ENCODE measurements at regions of chr20 and their contacts with region 1.

Region 1: DNA sequence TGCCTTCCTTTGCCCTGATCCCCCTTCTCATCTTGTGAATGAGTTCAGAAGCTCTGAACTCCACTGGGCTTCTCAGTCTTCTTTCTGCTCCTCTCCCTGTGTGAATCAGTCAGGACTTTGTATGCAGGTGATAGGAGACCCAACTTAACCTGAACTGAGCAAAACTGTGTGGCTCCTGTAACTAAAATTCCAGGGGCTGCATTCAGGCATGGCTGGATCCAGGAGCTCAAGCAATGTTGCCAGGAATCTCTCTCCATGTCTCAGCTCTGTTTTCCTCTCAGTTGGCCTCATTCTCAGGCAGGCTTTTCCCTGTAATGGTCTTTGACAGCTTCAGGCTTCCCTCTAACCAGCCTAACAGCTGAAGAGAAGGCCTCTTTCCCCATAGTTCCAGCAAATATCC is 50.9 kb upstream of the ZNFX1 start:
- DNase-seq: no peak
- H3K4me3 Mint-ChIP-seq: no peak overlapping the region
- H3K27ac Mint-ChIP-seq: no peak overlapping the region
- H3K4me1 Mint-ChIP-seq: no peaks in the 10 kb centered on the region
- H3K27me3 Mint-ChIP-seq: peaks cover 33% of the 10 kb centered on the region
- CTCF ChIP-seq: no peak

Region 2: GRCh38 chr20:49078296-49078695 is 250.5 kb before region 1 on chr20:
- CTCF ChIA-PET with region 1: no interaction called
- POLR2A ChIA-PET with region 1: no interaction called
- intact Hi-C with region 1: no loop called
- DNase-seq: no peak
- H3K4me3 Mint-ChIP-seq: no peak overlapping the region
- H3K27ac Mint-ChIP-seq: no peak overlapping the region
- H3K4me1 Mint-ChIP-seq: no peaks in the 10 kb centered on the region
- H3K27me3 Mint-ChIP-seq: no peaks in the 10 kb centered on the region
- CTCF ChIP-seq: no peak

Region 3: GRCh38 chr20:49534255-49534712 is 205.5 kb after region 1 on chr20:
- CTCF ChIA-PET with region 1: interaction called, 80 read pairs
- POLR2A ChIA-PET with region 1: no interaction called
- intact Hi-C with region 1: no loop called
- DNase-seq: peak; percentile 74
- H3K4me3 Mint-ChIP-seq: no peak overlapping the region
- H3K27ac Mint-ChIP-seq: no peak overlapping the region
- H3K4me1 Mint-ChIP-seq: peaks cover 4% of the 10 kb centered on the region
- H3K27me3 Mint-ChIP-seq: no peaks in the 10 kb centered on the region
- CTCF ChIP-seq: peak; percentile 87